ENCODE measurements at regions of chr17 and their contacts with region 1.

Region 1: DNA sequence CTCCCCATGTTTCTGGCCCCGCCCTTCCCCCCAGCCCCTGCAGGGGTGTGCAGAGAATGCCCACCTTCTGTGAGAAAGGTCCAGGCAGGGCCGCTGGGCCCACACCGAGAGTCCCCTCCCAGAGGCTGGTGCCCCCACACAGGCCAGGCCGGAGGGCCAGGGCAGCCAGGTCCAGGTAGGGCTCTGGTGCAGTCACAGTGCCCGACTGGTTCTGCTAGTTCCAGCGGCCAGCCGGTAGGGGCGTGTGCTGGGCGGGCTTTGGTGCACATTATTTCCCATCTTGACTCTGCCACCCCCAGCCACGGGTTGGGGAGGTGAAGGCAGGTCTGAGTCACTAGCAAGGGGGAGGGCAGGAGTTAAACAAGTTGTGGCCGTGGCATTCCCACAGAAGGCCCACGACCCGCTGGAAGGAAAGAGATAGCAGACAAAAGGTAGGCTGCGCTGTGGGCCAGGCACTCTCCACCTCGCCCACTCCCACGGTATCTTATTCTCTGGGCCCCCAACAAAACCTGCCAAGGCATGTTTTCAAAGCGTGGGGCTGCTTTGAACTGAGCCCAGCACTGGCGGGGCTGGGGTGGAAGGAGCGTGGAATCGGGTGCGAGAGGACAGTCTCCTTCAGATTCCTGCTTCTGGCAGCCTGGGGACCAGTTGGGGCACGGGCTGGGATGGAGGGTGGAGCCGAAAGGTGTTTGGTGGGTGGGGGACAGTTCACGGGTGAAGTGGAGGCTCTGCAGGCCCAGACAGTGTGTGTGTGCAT is 1.9 kb downstream of the EPN3 start:
- DNase-seq: peak; percentile 86
- H3K4me3 ChIP-seq: peak overlapping the region; percentile 51 to 87 (median 64)
- H3K27ac ChIP-seq: peak overlapping the region; percentile 36
- H3K4me1 ChIP-seq: peaks cover 56% of the 10 kb centered on the region
- H3K27me3 ChIP-seq: no peaks in the 10 kb centered on the region
- CTCF ChIP-seq: peak; percentile 52 to 74

Region 2: GRCh38 chr17:50487213-50488096 is 46.9 kb before region 1 on chr17:
- CTCF ChIA-PET with region 1: interaction called, 4 read pairs
- dilution Hi-C with region 1: no loop called
- in situ Hi-C with region 1: loop called in 1 of 2 experiments (anchors 5 kb)
- intact Hi-C with region 1: loop called (anchors 1 kb)
- DNase-seq: peak; percentile 91
- H3K4me3 ChIP-seq: no peak overlapping the region
- H3K27ac ChIP-seq: peak overlapping the region; percentile 45
- H3K4me1 ChIP-seq: peaks cover 27% of the 10 kb centered on the region
- H3K27me3 ChIP-seq: no peaks in the 10 kb centered on the region
- CTCF ChIP-seq: no peak

Region 3: GRCh38 chr17:50523208-50523607 is 11.2 kb before region 1 on chr17:
- CTCF ChIA-PET with region 1: no interaction called
- dilution Hi-C with region 1: no loop called
- in situ Hi-C with region 1: no loop called
- intact Hi-C with region 1: loop called (anchors 1 kb)
- DNase-seq: peak; percentile 81
- H3K4me3 ChIP-seq: no peak overlapping the region
- H3K27ac ChIP-seq: no peak overlapping the region
- H3K4me1 ChIP-seq: peaks cover 52% of the 10 kb centered on the region
- H3K27me3 ChIP-seq: no peaks in the 10 kb centered on the region
- CTCF ChIP-seq: peak in 1 of 2 donors; percentile 16